Activated CD8-positive, alpha-beta T cell treated with anti-CD3 and anti-CD28 coated beads, Interleukin-2, amount 10 ng/mL, durations not matched to agents 7 days and 5 days (primary cell): ENCODE measurements at regions of chr16 and their contacts with region 1.

Region 1: GRCh38 chr16:56625140-56625942 is at the start of gene MT1E:
- DNase-seq: peak; percentile 77
- ATAC-seq: peak; percentile 89
- H3K4me3 Mint-ChIP-seq: peak within 1 kb of the TSS; percentile 81
- H3K27ac Mint-ChIP-seq: peak within 1 kb of the TSS; percentile 87
- H3K4me1 Mint-ChIP-seq: peaks cover 18% of the 10 kb centered on the region
- H3K27me3 Mint-ChIP-seq: peaks cover 33% of the 10 kb centered on the region
- total RNA-seq, gene MT1E: 65.0 to 74.8 TPM

Region 2: GRCh38 chr16:56608043-56608875 is 17.1 kb before region 1 on chr16 and contains the start of gene MT2A:
- CTCF ChIA-PET with region 1: interaction called, 14 read pairs
- POLR2A ChIA-PET with region 1: interaction called, 56 read pairs
- DNase-seq: peak; percentile 94
- ATAC-seq: peak; percentile 90
- H3K4me3 Mint-ChIP-seq: peak within 1 kb of the TSS; percentile 93
- H3K27ac Mint-ChIP-seq: peak within 1 kb of the TSS; percentile 87
- H3K4me1 Mint-ChIP-seq: peaks cover 43% of the 10 kb centered on the region
- H3K27me3 Mint-ChIP-seq: no peaks in the 10 kb centered on the region
- total RNA-seq, gene MT2A: 186 to 210 TPM

Region 3: DNA sequence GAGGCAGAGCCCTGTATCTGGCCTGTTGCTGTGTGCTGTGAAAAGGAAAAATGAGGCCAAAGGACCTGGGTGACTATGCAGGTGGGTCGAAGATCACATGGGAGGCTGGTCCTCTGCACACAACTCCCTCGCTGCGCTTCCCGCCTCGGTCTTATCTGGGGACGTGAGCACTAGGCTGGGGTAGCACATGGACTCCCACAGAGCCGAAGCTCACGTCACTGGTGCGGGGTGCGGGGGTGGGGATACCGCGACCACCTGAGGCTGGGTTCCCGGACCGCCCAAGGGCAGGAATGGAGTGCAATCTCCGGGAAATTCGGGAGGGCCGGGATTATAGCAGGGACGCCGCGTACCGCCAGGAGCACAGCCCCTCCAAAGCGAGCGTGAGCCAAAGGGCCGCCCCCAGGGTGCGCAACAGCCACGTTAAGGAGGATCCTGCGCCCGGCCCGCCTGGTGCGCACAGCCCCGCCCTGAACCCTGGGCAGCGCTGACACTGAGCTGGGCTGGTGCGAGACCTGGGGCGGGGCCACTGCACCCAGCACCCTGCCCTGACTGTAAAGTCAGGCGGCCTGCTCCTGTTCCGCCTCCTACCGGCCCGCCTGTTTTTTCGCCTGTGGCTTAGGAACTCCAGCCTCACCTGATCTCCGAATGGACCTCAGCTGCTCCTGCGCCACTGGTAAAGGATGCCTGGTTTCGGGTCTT is 17.9 kb after region 1 on chr16:
- CTCF ChIA-PET with region 1: interaction called, 6 read pairs
- POLR2A ChIA-PET with region 1: interaction called, 12 read pairs
- DNase-seq: peak; percentile 87
- ATAC-seq: peak; percentile 100
- H3K4me3 Mint-ChIP-seq: peak overlapping the region; percentile 66
- H3K27ac Mint-ChIP-seq: no peak overlapping the region
- H3K4me1 Mint-ChIP-seq: peaks cover 28% of the 10 kb centered on the region
- H3K27me3 Mint-ChIP-seq: peaks cover 69% of the 10 kb centered on the region

Region 4: DNA sequence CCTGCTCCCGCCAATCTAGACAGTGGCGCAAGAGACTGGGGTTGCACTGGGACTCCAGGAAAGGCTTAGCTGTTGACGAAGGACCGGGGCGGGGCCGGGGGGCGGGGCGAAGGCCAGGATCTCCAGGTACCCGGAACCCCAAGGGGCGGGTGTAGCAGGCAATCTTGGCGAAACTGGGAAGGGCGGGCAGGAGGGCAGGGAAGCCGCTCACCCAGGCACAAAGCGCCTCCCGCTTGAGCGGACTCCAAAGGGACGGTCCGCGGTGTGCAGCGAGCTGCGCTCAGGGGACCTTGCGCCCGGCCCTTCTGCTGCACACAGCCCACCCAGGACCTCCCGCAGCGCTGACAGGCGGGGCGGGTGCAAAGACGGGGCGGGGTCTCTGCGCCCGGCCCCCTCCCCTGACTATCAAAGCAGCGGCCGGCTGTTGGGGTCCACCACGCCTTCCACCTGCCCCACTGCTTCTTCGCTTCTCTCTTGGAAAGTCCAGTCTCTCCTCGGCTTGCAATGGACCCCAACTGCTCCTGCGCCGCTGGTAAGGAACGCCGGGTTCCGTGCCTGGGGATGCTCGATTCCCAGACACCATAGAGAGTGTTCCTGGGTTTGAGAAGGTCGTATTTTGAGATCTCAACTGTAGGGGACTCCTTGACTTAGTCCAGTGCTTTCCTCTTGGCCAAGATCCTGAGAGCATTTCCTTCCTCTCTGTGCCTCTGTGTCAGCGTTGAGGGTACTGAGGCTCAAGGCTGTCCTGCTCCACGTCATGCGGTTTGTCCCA is 32.4 kb after region 1 on chr16 and contains the start of gene MT1F:
- CTCF ChIA-PET with region 1: no interaction called
- POLR2A ChIA-PET with region 1: interaction called, 11 read pairs
- DNase-seq: peak; percentile 81
- ATAC-seq: peak; percentile 88
- H3K4me3 Mint-ChIP-seq: peak within 1 kb of the TSS; percentile 97
- H3K27ac Mint-ChIP-seq: peak within 1 kb of the TSS; percentile 88
- H3K4me1 Mint-ChIP-seq: peaks cover 28% of the 10 kb centered on the region
- H3K27me3 Mint-ChIP-seq: peaks cover 15% of the 10 kb centered on the region
- total RNA-seq, gene MT1F: 25.8 to 28.0 TPM

Region 5: DNA sequence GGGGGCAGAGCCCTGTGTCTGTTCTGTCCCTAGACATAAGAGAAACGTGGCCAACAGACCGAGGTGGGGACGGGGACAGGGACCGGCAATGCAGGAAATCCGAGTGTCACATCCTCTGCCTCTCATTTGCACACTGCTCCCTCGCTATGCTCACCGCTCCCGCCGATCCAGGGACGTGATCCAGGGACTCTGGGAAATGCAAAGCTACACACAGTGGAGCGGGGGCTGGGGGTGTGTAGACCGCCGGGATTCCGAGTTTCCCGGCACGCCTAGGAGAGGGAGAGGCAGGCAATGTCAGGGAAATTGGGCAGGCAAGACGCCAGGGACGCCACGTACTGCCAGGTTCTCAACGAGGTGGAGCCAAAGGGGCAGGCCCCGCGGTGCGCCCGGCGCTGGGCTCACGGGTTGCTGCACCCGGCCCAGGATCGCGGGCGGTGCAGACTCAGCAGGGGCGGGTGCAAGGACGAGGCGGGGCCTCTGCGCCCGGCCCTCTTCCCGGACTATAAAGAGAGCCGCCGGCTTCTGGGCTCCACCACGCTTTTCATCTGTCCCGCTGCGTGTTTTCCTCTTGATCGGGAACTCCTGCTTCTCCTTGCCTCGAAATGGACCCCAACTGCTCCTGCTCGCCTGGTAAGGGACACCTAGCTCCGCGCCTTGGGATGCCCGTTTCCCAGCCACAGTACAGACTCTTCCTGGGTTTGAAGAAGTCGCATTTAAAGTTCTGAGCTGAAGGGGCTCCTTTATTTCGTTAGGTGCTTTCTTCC is 56.8 kb after region 1 on chr16 and contains the start of gene MT1X:
- CTCF ChIA-PET with region 1: interaction called, 3 read pairs
- POLR2A ChIA-PET with region 1: interaction called, 10 read pairs
- DNase-seq: peak; percentile 94
- ATAC-seq: peak; percentile 97
- H3K4me3 Mint-ChIP-seq: peak within 1 kb of the TSS; percentile 96
- H3K27ac Mint-ChIP-seq: peak within 1 kb of the TSS; percentile 98
- H3K4me1 Mint-ChIP-seq: peaks cover 34% of the 10 kb centered on the region
- H3K27me3 Mint-ChIP-seq: no peaks in the 10 kb centered on the region
- total RNA-seq, gene MT1X: 85.3 to 86.0 TPM

Region 6: GRCh38 chr16:56753410-56753809 is 128.1 kb after region 1 on chr16:
- CTCF ChIA-PET with region 1: no interaction called
- POLR2A ChIA-PET with region 1: no interaction called
- DNase-seq: no peak
- ATAC-seq: no peak
- H3K4me3 Mint-ChIP-seq: no peak overlapping the region
- H3K27ac Mint-ChIP-seq: no peak overlapping the region
- H3K4me1 Mint-ChIP-seq: peaks cover 6% of the 10 kb centered on the region
- H3K27me3 Mint-ChIP-seq: no peaks in the 10 kb centered on the region